ENCODE measurements at regions of chr11 and their contacts with region 1.

Region 1: GRCh38 chr11:6746086-6746618 is 25.6 kb downstream of the OR2AG2 start:
- DNase-seq: peak; percentile 24
- ATAC-seq: peak; percentile 80
- H3K4me3 Mint-ChIP-seq: no peak overlapping the region
- H3K27ac Mint-ChIP-seq: no peak overlapping the region
- H3K4me1 Mint-ChIP-seq: peaks cover 2% of the 10 kb centered on the region
- H3K27me3 Mint-ChIP-seq: no peaks in the 10 kb centered on the region
- CTCF ChIP-seq: no peak

Region 2: GRCh38 chr11:6234387-6235107 is 511.6 kb before region 1 on chr11 and contains the start of gene FHIP1B:
- CTCF ChIA-PET with region 1: no interaction called
- POLR2A ChIA-PET with region 1: no interaction called
- intact Hi-C with region 1: loop called (anchors 10 kb)
- DNase-seq: peak; percentile 95
- ATAC-seq: peak; percentile 93
- H3K4me3 Mint-ChIP-seq: peak within 1 kb of the TSS; percentile 99
- H3K27ac Mint-ChIP-seq: peak within 1 kb of the TSS; percentile 92
- H3K4me1 Mint-ChIP-seq: peaks cover 32% of the 10 kb centered on the region
- H3K27me3 Mint-ChIP-seq: peaks cover 3% of the 10 kb centered on the region
- CTCF ChIP-seq: no peak
- total RNA-seq, gene FHIP1B: 27.7 and 32.8 TPM in 2 replicates

Region 3: GRCh38 chr11:6612213-6613041 is 133.7 kb before region 1 on chr11 and contains the start of gene TAF10:
- CTCF ChIA-PET with region 1: no interaction called
- POLR2A ChIA-PET with region 1: interaction called, 19 read pairs
- intact Hi-C with region 1: loop called (anchors 1 kb)
- DNase-seq: peak; percentile 92
- ATAC-seq: peak; percentile 83
- H3K4me3 Mint-ChIP-seq: peak within 1 kb of the TSS; percentile 85
- H3K27ac Mint-ChIP-seq: peak within 1 kb of the TSS; percentile 85
- H3K4me1 Mint-ChIP-seq: peaks cover 29% of the 10 kb centered on the region
- H3K27me3 Mint-ChIP-seq: no peaks in the 10 kb centered on the region
- CTCF ChIP-seq: no peak
- total RNA-seq, gene TAF10: 149 and 154 TPM in 2 replicates

Region 4: GRCh38 chr11:6667733-6668374 is 78.3 kb before region 1 on chr11:
- CTCF ChIA-PET with region 1: no interaction called
- POLR2A ChIA-PET with region 1: no interaction called
- intact Hi-C with region 1: no loop called
- DNase-seq: no peak
- ATAC-seq: peak; percentile 83
- H3K4me3 Mint-ChIP-seq: no peak overlapping the region
- H3K27ac Mint-ChIP-seq: no peak overlapping the region
- H3K4me1 Mint-ChIP-seq: peaks cover 4% of the 10 kb centered on the region
- H3K27me3 Mint-ChIP-seq: peaks cover 2% of the 10 kb centered on the region
- CTCF ChIP-seq: no peak

Region 5: GRCh38 chr11:6757373-6757967 is 11.3 kb after region 1 on chr11:
- CTCF ChIA-PET with region 1: interaction called, 391 read pairs
- POLR2A ChIA-PET with region 1: interaction called, 20 read pairs
- intact Hi-C with region 1: loop called (anchors 1 kb)
- DNase-seq: no peak
- ATAC-seq: peak; percentile 78
- H3K4me3 Mint-ChIP-seq: no peak overlapping the region
- H3K27ac Mint-ChIP-seq: no peak overlapping the region
- H3K4me1 Mint-ChIP-seq: no peaks in the 10 kb centered on the region
- H3K27me3 Mint-ChIP-seq: peaks cover 3% of the 10 kb centered on the region
- CTCF ChIP-seq: peak; percentile 41

Region 6: DNA sequence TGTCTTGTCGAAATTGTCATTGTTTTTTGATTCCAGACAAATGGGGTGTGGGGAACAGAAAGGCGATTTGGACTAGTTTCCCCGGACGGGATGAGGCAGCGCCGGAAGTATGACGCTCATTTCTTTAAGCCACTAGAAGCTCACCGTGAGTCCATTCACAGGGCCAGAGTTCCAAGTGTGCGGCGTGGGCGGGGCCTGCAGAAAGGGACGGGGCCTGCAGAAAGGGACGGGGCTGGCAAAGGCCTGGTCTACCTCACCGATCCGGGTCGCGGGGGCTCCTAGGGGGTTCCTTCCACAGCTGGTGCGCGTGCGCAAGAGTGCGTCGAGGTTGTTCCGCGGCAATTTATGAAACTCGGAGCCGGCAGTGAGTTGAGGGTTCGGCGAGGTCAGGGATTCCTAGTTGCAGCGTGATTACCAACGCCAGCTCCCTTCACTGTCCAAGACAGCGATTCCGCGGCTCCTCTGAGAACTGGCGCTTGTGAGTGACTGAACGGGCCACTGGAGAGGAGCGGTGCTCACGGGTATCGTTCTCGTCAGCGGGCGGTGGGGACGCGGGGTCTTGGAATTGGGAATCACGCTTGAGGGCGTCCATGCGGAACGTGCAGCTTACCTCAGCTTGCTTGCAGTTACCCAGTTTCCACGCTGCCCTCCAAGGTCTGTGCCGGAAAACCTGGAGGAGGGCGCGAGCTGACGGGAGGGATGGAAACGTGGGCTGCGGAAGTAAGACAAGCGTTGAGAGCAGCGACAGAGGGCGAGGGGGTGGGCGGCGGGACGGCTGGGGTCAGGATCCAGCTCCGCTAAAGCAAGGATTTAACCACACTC is 180.3 kb after region 1 on chr11 and contains the start of gene ZNF215:
- CTCF ChIA-PET with region 1: no interaction called
- POLR2A ChIA-PET with region 1: no interaction called
- intact Hi-C with region 1: loop called (anchors 10 kb)
- DNase-seq: peak; percentile 43
- ATAC-seq: peak; percentile 76
- H3K4me3 Mint-ChIP-seq: peak within 1 kb of the TSS; percentile 93
- H3K27ac Mint-ChIP-seq: peak within 1 kb of the TSS; percentile 81
- H3K4me1 Mint-ChIP-seq: peaks cover 19% of the 10 kb centered on the region
- H3K27me3 Mint-ChIP-seq: no peaks in the 10 kb centered on the region
- CTCF ChIP-seq: no peak
- total RNA-seq, gene ZNF215: 5.3 and 5.4 TPM in 2 replicates